ENCODE measurements at regions of chr5 and their contacts with region 1.

Region 1: DNA sequence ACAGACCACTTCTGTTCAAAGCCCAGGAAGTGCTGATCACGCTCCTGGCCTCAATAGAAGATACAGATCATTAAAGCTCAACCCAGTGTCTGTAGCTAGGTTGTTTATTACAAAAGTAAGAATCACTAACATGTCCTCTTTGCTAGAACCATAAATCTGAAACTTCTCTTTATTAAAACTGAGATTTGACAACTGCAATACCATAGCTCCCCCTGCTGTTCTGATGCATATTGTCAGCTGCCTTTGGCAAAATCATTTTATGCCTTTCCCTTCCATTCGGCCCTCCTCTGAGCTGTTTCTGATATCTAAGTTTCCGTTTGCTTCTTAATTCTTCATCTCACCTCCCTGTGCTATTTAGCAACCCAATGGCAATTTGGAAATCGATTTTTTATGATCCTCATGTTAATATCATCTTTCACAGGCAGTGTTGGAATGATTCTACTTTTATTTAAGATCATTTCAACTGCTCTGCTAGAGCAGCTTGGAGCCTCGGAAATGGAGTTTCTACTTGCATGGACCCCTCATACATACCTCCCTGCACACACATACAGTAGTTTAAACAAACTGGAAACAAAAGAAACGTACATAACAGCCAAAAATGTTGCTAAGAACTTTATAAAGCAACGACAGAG is 998.8 kb downstream of the MAT2B start:
- DNase-seq: peak; percentile 47
- H3K4me3 ChIP-seq: no peak overlapping the region
- H3K27ac ChIP-seq: no peak overlapping the region
- H3K27me3 ChIP-seq: no peaks in the 10 kb centered on the region
- CTCF ChIP-seq: peak; percentile 86

Region 2: GRCh38 chr5:163580516-163580915 is 923.7 kb before region 1 on chr5:
- CTCF ChIA-PET with region 1: interaction called, 11 read pairs
- POLR2A ChIA-PET with region 1: no interaction called
- DNase-seq: no peak
- H3K4me3 ChIP-seq: no peak overlapping the region
- H3K27ac ChIP-seq: no peak overlapping the region
- H3K27me3 ChIP-seq: no peaks in the 10 kb centered on the region
- CTCF ChIP-seq: no peak

Region 3: DNA sequence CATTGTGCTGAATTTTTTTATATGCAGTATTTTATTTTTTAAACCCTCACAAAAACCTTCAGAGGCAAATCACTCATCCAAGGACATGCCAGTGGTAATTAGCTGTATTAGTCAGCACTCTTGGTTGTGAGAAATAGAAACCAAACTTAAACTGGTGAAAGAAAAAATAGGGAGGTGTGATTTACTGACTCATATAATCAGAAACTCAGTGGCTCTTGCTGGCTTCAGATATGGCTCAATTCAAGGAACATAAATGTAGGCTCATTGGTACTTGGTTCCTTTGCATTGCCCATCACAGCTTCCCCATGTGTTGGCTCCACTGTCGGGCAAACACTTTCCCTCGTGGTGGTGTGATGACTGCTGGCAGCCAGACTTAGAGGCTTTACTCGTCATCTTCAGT is 501.6 kb before region 1 on chr5:
- CTCF ChIA-PET with region 1: interaction called, 10 read pairs
- POLR2A ChIA-PET with region 1: no interaction called
- DNase-seq: no peak
- H3K4me3 ChIP-seq: no peak overlapping the region
- H3K27ac ChIP-seq: no peak overlapping the region
- H3K27me3 ChIP-seq: no peaks in the 10 kb centered on the region
- CTCF ChIP-seq: no peak

Region 4: DNA sequence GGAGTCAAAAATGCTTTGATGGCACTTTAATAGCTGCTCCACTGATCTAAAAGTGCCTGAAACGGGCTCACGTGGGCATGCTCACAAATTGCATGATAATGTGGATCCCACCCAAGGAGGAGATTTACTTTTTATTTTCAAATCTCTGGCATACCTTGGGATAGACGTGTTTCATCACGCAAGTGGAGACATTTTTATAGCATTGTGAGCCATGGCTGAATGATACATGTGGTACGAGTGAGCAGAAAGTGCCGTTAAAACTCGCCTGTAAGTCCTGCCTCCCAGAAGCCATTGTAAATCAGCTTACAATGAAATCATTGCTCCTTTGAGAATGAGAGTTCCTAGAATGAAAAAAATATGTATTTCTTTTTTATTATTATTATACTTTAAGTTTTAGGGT is 484.1 kb before region 1 on chr5:
- CTCF ChIA-PET with region 1: interaction called, 155 read pairs
- POLR2A ChIA-PET with region 1: no interaction called
- DNase-seq: no peak
- H3K4me3 ChIP-seq: no peak overlapping the region
- H3K27ac ChIP-seq: no peak overlapping the region
- H3K27me3 ChIP-seq: no peaks in the 10 kb centered on the region
- CTCF ChIP-seq: no peak

Region 5: DNA sequence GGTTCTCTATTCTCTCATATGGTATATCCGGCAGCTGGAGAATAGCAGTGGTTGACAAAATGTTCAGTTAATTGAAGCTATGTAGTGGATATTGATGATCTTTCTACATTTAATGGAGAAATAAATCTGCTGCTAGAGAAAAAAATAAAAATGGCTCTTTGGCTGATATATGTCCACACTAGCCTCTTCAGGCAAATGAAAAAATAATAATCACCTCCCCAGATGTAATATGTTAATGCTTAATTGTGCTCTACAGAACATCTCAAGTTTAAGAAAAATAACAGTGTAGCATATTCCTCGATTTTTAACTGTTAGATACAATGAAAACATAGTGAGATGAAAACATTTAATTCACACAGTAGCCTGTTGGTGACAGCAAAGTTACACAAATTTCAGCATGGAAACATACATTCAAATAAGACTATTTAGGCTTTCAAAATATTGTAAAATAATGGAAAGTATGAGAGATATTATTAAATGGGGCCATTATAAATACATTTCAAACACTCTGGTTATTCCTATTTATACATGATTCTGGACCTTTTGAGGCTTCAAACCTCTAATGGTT is 455.8 kb before region 1 on chr5:
- CTCF ChIA-PET with region 1: interaction called, 33 read pairs
- POLR2A ChIA-PET with region 1: no interaction called
- DNase-seq: no peak
- H3K4me3 ChIP-seq: no peak overlapping the region
- H3K27ac ChIP-seq: no peak overlapping the region
- H3K27me3 ChIP-seq: no peaks in the 10 kb centered on the region
- CTCF ChIP-seq: peak; percentile 34

Region 6: DNA sequence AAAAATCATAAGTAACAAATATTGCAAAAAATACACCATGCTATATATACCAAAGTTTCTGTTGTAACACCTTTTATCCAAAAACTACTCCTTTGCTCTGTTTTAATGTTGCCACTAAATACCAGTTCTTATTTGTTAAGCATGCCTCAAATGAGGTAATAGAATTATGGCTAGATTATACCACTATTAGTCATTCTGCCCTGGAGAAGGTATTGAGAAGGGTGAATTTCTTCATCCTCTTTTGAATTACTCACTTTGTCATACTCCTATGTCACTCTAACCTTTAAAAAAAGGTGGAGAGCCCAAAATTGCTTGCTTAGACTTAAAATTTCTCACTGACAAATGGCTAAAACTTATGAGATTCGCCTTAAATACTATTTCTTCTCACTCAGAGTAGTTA is 247.9 kb before region 1 on chr5:
- CTCF ChIA-PET with region 1: no interaction called
- POLR2A ChIA-PET with region 1: no interaction called
- DNase-seq: no peak
- H3K4me3 ChIP-seq: no peak overlapping the region
- H3K27ac ChIP-seq: no peak overlapping the region
- H3K27me3 ChIP-seq: no peaks in the 10 kb centered on the region
- CTCF ChIP-seq: no peak

Region 7: DNA sequence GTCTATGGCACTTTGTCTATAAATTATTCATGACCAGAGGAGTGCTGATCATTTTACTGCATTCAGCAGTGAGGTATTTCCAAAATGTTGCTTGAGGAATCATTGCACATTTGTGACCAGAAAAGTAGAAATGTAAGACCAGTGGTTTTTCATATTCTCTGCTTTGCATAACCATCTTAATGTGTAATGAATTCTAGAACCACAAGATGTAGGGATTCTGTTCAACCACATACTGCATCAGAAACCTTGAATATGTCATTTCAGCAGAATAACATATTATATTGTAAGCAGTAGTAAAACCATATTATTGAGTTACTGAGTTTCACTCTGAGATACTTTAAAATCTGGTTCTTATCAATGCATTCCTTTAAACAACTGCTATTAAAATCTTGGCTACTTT is 244.6 kb after region 1 on chr5:
- CTCF ChIA-PET with region 1: no interaction called
- POLR2A ChIA-PET with region 1: no interaction called
- DNase-seq: no peak
- H3K4me3 ChIP-seq: no peak overlapping the region
- H3K27ac ChIP-seq: no peak overlapping the region
- H3K27me3 ChIP-seq: no peaks in the 10 kb centered on the region
- CTCF ChIP-seq: no peak

Region 8: DNA sequence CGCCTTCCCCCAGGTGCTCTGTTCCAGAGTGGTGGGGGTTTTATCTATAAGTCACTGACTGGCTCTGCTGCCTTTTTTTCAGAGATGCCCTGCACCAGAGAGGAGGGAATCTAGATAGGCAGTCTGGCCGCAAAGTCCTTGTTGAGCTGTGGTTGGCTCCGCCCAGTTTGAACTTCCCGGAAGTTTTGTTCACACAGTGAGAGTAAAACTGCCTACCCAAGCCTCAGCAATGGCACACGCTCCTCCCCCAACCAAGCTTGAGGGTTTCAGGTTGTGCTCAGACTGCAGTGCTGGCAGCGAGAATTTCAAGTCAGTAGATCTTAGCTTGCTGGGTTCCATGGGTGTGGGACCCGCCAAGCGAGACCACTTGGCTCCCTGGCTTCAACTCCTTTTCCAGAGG is 429.8 kb after region 1 on chr5:
- CTCF ChIA-PET with region 1: no interaction called
- POLR2A ChIA-PET with region 1: no interaction called
- DNase-seq: no peak
- H3K4me3 ChIP-seq: no peak overlapping the region
- H3K27ac ChIP-seq: no peak overlapping the region
- H3K27me3 ChIP-seq: no peaks in the 10 kb centered on the region
- CTCF ChIP-seq: no peak

Measured in AG04450 (cell line).